ENCODE measurements at regions of chr11 and their contacts with region 1.

Region 1: GRCh38 chr11:8928981-8929565 is 3.7 kb downstream of the C11orf16 start:
- DNase-seq: no peak
- H3K4me3 ChIP-seq: no peak overlapping the region
- H3K27ac ChIP-seq: no peak overlapping the region
- H3K4me1 ChIP-seq: peaks cover 0 to 5% (median 0%) of the 10 kb centered on the region in 4 experiments
- H3K27me3 ChIP-seq: no peaks in the 10 kb centered on the region

Region 2: DNA sequence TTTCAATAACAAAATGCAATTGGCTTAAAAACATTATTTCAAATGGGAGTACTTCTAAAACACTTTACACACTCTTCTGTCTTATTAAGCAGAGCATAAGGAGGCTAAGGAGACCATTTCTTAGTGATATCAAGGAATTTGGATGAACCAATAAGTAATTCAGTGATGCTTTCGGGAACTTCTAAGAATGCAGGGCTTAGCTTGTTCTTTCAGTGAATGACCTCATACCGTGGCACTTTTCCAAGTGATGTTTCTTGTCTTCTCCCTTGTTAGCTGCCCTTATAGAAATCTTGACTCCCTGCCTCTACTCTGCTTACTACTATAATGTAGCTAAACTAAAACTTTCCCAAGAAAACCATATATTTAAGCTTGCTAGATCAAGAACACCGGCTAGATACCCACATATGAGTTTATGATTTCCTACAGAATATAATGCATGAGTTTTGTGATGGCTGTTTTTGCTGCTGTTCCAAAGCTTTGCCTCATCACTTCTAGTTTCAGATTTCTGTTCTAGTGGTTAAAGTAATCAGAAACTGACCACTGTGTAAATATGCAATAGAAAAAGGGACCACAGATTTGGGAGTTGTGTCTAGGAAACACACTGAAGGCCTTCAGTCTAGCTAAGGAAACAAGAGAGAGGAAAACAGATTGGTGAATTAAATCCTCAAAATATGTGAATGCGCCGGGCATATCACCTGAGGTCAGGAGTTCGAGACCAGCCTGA is 297.5 kb before region 1 on chr11:
- CTCF ChIA-PET with region 1: no interaction called
- POLR2A ChIA-PET with region 1: no interaction called
- DNase-seq: no peak
- H3K4me3 ChIP-seq: no peak overlapping the region
- H3K27ac ChIP-seq: no peak overlapping the region
- H3K4me1 ChIP-seq: no peaks in the 10 kb centered on the region
- H3K27me3 ChIP-seq: no peaks in the 10 kb centered on the region

Region 3: GRCh38 chr11:8871171-8871775 is 57.8 kb before region 1 on chr11:
- CTCF ChIA-PET with region 1: no interaction called
- POLR2A ChIA-PET with region 1: no interaction called
- DNase-seq: peak in 2 of 3 donors; percentile 11 to 15
- H3K4me3 ChIP-seq: peak overlapping the region; percentile 30 to 77 (median 66)
- H3K27ac ChIP-seq: no peak overlapping the region
- H3K4me1 ChIP-seq: peaks cover 4 to 19% (median 11%) of the 10 kb centered on the region in 4 experiments
- H3K27me3 ChIP-seq: peaks cover 7 to 67% (median 24%) of the 10 kb centered on the region in 5 experiments

Region 4: DNA sequence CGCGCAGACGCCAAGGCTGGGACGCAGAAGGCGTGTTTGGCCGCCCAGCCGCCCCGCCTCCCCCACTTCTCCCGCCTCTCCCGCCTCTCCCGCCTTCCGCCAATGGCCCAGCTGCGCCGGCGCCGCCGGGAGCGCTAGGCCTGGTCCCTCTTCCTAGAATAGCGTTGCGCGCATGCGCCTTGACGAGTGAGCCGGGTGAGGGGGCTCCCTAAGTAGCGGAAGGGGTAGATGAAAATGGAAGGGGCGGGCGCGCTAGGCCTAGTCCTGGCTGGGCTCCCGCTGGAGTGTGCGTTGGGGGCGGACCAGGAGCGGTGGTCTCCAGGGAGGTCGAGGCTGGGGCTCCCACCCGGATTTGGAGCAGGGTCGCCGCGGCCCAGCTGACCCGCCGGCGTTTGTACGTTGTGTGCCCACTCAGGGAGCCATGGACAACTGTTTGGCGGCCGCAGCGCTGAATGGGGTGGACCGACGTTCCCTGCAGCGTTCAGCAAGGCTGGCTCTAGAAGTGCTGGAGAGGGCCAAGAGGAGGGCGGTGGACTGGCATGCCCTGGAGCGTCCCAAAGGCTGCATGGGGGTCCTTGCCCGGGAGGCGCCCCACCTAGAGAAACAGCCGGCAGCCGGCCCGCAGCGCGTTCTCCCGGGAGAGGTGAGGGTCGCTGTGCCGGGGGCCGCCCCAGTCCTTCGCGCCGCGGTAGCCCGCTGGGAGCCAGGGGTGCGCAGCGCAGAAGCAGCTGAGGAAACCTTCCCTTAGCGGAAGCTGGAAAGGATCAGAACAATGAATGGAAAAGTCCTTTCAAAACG is 17.8 kb before region 1 on chr11 and contains the start of gene AKIP1:
- CTCF ChIA-PET with region 1: interaction called, 10 read pairs
- POLR2A ChIA-PET with region 1: no interaction called
- DNase-seq: peak; percentile 95 to 98 (median 96)
- H3K4me3 ChIP-seq: peak within 1 kb of the TSS; percentile 83 to 96 (median 93)
- H3K27ac ChIP-seq: peak within 1 kb of the TSS; percentile 33 to 85
- H3K4me1 ChIP-seq: peaks cover 15 to 33% (median 27%) of the 10 kb centered on the region in 4 experiments
- H3K27me3 ChIP-seq: peaks cover 0 to 4% (median 0%) of the 10 kb centered on the region in 5 experiments

Measured in common myeloid progenitor, CD34-positive (primary cell).